HEK293 (cell line): ENCODE measurements at regions of chr5 and their contacts with region 1.

Region 1: DNA sequence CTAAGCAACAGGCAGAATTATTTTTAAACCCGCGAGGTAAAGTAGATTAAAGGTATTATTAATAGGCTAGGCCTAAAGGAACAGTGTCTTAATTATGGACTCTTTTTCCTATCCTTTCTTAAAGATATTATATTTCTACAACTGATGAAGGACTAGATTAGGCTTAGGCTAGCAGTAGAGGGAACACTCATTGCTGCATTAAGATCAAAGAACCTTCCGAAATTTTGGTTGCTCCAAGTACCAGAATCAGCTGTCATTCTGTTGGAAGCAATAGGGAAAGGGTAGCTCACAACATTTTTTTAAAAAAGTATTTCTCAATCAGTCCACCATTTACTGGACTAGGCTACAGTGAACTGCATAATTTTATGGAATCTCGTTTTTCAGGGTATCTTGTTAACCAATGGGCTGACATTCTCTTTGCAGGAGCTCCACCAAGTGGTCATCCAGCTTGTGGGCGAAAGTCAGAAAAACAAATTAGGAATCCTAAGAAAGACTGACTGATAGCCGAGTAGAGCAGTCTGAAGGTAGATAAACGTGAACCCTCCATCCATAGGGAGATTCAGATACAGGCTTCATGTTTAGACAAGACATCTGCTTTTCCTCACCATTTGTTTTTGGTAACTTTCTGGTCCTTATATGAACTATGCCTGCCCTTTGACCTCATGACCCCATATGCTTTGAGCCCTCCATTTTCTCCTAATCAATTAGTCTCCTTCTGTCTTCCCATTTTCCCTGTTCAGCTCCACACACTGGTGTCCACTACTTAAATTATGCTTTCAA is 103.6 kb upstream of the CHD1 start:
- H3K4me3 ChIP-seq: no peak overlapping the region
- H3K27ac ChIP-seq: no peak overlapping the region
- H3K4me1 ChIP-seq: no peaks in the 10 kb centered on the region
- CTCF ChIP-seq: peak; percentile 72

Region 2: GRCh38 chr5:98905857-98906690 is 126.3 kb before region 1 on chr5:
- CTCF ChIA-PET with region 1: interaction called, 28 read pairs
- POLR2A ChIA-PET with region 1: interaction called, 3 read pairs
- H3K4me3 ChIP-seq: no peak overlapping the region
- H3K27ac ChIP-seq: no peak overlapping the region
- H3K4me1 ChIP-seq: peaks cover 6% of the 10 kb centered on the region; the same call in 1 of the 2 replicates
- CTCF ChIP-seq: no peak

Region 3: GRCh38 chr5:98911280-98912040 is 121.0 kb before region 1 on chr5:
- CTCF ChIA-PET with region 1: interaction called, 11 read pairs
- POLR2A ChIA-PET with region 1: interaction called, 3 read pairs
- H3K4me3 ChIP-seq: no peak overlapping the region
- H3K27ac ChIP-seq: no peak overlapping the region
- H3K4me1 ChIP-seq: peaks cover 16% of the 10 kb centered on the region
- CTCF ChIP-seq: no peak